Naive thymus-derived CD4-positive, alpha-beta T cell (primary cell): ENCODE measurements at regions of chr5 and their contacts with region 1.

Region 1: GRCh38 chr5:93582677-93583438 is at the start of gene NR2F1:
- DNase-seq: no peak
- ATAC-seq: no peak
- H3K4me3 ChIP-seq: no peak within 1 kb of the TSS
- H3K4me3 Mint-ChIP-seq: peak within 1 kb of the TSS in 1 of 10 donors; percentile 13
- H3K27ac ChIP-seq: no peak within 1 kb of the TSS
- H3K27ac Mint-ChIP-seq: peak within 1 kb of the TSS in 2 of 9 donors; percentile 31 to 70
- H3K4me1 ChIP-seq: peaks cover 26 to 35% of the 10 kb centered on the region in 2 donors
- H3K4me1 Mint-ChIP-seq: peaks cover 14 to 39% (median 35%) of the 10 kb centered on the region in 7 donors
- H3K27me3 ChIP-seq: peaks cover 36 to 70% of the 10 kb centered on the region in 2 donors
- H3K27me3 Mint-ChIP-seq: peaks cover 40 to 47% (median 45%) of the 10 kb centered on the region in 5 donors
- total RNA-seq, gene NR2F1: not detected

Region 2: GRCh38 chr5:93572608-93573353 is 10.1 kb before region 1 on chr5:
- CTCF ChIA-PET with region 1: no interaction called
- POLR2A ChIA-PET with region 1: no interaction called
- intact Hi-C with region 1: loop called in 1 of 2 experiments (anchors 1 kb)
- DNase-seq: peak in 1 of 9 donors; percentile 25
- ATAC-seq: no peak
- H3K4me3 ChIP-seq: no peak overlapping the region
- H3K4me3 Mint-ChIP-seq: peak overlapping the region in 2 of 10 donors; percentile 23 to 35
- H3K27ac ChIP-seq: no peak overlapping the region
- H3K27ac Mint-ChIP-seq: no peak overlapping the region
- H3K4me1 ChIP-seq: peaks cover 0 to 15% of the 10 kb centered on the region in 2 donors
- H3K4me1 Mint-ChIP-seq: peaks cover 0 to 34% (median 18%) of the 10 kb centered on the region in 7 donors
- H3K27me3 ChIP-seq: peaks cover 16 to 34% of the 10 kb centered on the region in 2 donors
- H3K27me3 Mint-ChIP-seq: peaks cover 84 to 93% (median 87%) of the 10 kb centered on the region in 5 donors

Region 3: GRCh38 chr5:93800988-93801811 is 218.3 kb after region 1 on chr5:
- CTCF ChIA-PET with region 1: interaction called, 3 read pairs
- POLR2A ChIA-PET with region 1: interaction called, 3 read pairs
- intact Hi-C with region 1: loop called (anchors 1 kb)
- DNase-seq: peak in 5 of 9 donors; percentile 16 to 38 (median 30)
- ATAC-seq: peak; percentile 50
- H3K4me3 ChIP-seq: no peak overlapping the region
- H3K4me3 Mint-ChIP-seq: no peak overlapping the region
- H3K27ac ChIP-seq: no peak overlapping the region
- H3K27ac Mint-ChIP-seq: peak overlapping the region in 2 of 9 donors; percentile 4 to 61
- H3K4me1 ChIP-seq: no peaks in the 10 kb centered on the region
- H3K4me1 Mint-ChIP-seq: peaks cover 0 to 4% (median 0%) of the 10 kb centered on the region in 7 donors
- H3K27me3 ChIP-seq: no peaks in the 10 kb centered on the region
- H3K27me3 Mint-ChIP-seq: peaks cover 0 to 5% (median 0%) of the 10 kb centered on the region in 5 donors

Region 4: DNA sequence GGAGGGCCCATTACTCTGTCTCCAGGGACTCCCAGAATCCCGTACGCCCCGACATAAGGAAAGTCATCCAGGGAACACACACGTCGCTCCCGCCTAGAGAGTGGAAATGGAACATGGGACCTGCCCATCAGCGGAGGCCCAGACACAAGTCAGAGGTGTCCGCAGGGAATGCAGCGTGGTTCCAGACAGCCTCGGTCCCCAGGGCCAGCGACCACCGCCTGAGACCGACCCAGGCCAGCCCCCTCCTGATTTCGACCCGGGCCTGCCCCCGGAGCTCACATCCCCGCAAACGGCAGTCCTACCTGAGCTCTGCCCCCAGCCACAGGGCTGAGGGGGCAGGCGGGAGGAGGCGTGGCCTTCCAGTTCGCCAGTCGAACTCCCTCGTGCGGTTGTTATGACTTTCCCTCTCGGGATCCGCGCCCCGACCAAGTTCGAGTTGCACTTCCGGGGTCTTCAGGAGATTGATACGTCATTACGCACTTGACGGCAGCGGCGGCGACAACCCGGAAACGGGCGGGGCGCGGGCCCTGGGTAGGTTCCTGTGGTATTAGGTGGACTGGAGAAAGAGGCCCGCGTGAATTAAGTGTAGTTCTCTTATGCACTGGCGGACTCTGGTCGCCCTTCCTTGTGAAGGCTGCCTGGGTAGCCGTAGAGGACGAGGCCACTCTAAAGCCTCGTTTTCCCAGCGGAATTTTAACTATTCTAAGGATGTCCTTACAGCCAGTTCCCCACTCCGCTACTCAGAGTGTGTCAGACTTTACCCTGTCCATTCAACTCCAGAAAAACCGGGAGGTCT is 528.5 kb after region 1 on chr5:
- CTCF ChIA-PET with region 1: no interaction called
- POLR2A ChIA-PET with region 1: no interaction called
- intact Hi-C with region 1: loop called in 1 of 2 experiments (anchors 2 kb)
- DNase-seq: peak; percentile 77 to 93 (median 90)
- ATAC-seq: peak; percentile 96
- H3K4me3 ChIP-seq: peak overlapping the region; percentile 90
- H3K4me3 Mint-ChIP-seq: peak overlapping the region; percentile 88 to 97 (median 95)
- H3K27ac ChIP-seq: peak overlapping the region; percentile 85
- H3K27ac Mint-ChIP-seq: peak overlapping the region; percentile 93 to 97 (median 96)
- H3K4me1 ChIP-seq: peaks cover 8 to 10% of the 10 kb centered on the region in 2 donors
- H3K4me1 Mint-ChIP-seq: peaks cover 21 to 50% (median 47%) of the 10 kb centered on the region in 7 donors
- H3K27me3 ChIP-seq: no peaks in the 10 kb centered on the region
- H3K27me3 Mint-ChIP-seq: peaks cover 0 to 15% (median 14%) of the 10 kb centered on the region in 5 donors

Region 5: DNA sequence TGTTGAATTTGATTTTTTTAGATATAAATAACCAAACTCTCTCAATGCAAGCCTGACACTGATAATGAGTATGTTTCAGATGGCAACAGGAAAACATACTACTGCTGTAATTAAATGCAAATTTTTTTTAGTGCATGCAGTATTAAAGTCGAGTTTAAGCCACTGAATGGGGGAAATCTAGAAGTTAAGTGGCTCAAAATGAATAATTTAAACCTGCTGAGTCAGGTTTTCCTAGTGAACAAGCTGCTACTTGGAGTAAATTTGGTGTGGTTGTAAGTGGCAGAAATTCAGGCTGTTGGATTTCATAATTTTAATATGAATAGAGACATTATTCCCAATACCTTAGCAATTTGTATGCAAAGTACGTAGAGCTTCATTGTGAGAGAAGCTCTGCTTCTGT is 1157.4 kb after region 1 on chr5:
- CTCF ChIA-PET with region 1: no interaction called
- POLR2A ChIA-PET with region 1: no interaction called
- intact Hi-C with region 1: loop called (anchors 1 to 5 kb)
- DNase-seq: no peak
- ATAC-seq: no peak
- H3K4me3 ChIP-seq: no peak overlapping the region
- H3K4me3 Mint-ChIP-seq: no peak overlapping the region
- H3K27ac ChIP-seq: no peak overlapping the region
- H3K27ac Mint-ChIP-seq: no peak overlapping the region
- H3K4me1 ChIP-seq: no peaks in the 10 kb centered on the region
- H3K4me1 Mint-ChIP-seq: peaks cover 0 to 2% (median 0%) of the 10 kb centered on the region in 7 donors
- H3K27me3 ChIP-seq: no peaks in the 10 kb centered on the region
- H3K27me3 Mint-ChIP-seq: peaks cover 0 to 9% (median 3%) of the 10 kb centered on the region in 5 donors